ENCODE measurements at regions of chr2 and their contacts with region 1.

Region 1: DNA sequence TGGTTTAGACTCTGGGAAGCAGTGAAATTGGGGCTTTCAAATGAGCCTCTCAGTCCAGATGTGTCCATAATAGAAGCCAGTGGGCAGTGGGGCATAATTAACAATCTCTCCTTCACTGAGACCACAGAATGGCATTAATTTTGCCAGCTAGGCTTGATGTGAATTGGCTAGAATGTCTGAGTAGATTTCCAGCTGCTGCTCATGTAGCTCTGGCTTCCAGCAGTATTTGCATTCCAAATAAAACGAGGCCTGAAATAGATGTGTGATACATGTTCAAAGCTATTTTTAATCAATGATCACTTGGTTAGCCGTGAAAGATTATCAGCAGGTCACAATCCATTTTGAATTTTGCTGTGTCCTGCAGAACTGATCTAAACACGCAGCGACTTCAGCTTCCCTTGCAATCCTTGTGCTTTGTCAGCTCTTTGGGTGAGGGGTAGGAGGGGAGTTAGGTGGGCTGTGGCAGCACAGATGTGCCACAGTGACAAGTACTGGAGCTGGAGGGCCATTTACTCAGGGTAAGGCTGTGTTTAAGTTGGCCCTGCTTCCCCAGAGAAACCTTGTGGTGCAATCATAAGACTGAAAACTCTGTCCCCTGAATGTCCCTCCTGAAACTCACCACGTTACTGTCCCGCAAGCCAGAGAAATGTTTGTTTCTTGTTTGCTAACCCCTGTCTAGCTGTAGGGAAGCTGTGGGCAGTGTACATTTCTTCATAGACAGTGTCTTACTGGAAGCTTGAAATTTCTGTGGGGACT is 56.9 kb upstream of the TMEM178A start:
- DNase-seq: no peak
- ATAC-seq: peak; percentile 54
- H3K4me3 Mint-ChIP-seq: no peak overlapping the region
- H3K27ac Mint-ChIP-seq: no peak overlapping the region
- H3K4me1 Mint-ChIP-seq: peaks cover 21% of the 10 kb centered on the region
- H3K27me3 Mint-ChIP-seq: peaks cover 2% of the 10 kb centered on the region; the same call in 1 of the 2 replicates
- CTCF ChIP-seq: no peak

Region 2: GRCh38 chr2:39306626-39307025 is 302.2 kb before region 1 on chr2:
- CTCF ChIA-PET with region 1: no interaction called
- POLR2A ChIA-PET with region 1: interaction called, 10 read pairs
- DNase-seq: no peak
- ATAC-seq: no peak; the same call in 1 of the 2 replicates
- H3K4me3 Mint-ChIP-seq: no peak overlapping the region
- H3K27ac Mint-ChIP-seq: peak overlapping the region; percentile 39; the same call in 1 of the 2 replicates
- H3K4me1 Mint-ChIP-seq: peaks cover 11% of the 10 kb centered on the region
- H3K27me3 Mint-ChIP-seq: no peaks in the 10 kb centered on the region
- CTCF ChIP-seq: no peak

Region 3: GRCh38 chr2:39513641-39514094 is 95.2 kb before region 1 on chr2:
- CTCF ChIA-PET with region 1: no interaction called
- POLR2A ChIA-PET with region 1: no interaction called
- DNase-seq: peak; percentile 35
- ATAC-seq: peak; percentile 39
- H3K4me3 Mint-ChIP-seq: no peak overlapping the region
- H3K27ac Mint-ChIP-seq: peak overlapping the region; percentile 26
- H3K4me1 Mint-ChIP-seq: peaks cover 70% of the 10 kb centered on the region
- H3K27me3 Mint-ChIP-seq: no peaks in the 10 kb centered on the region
- CTCF ChIP-seq: 0 out of 2 replicates have a peak, but pooled peaks have one; percentile 17

Region 4: DNA sequence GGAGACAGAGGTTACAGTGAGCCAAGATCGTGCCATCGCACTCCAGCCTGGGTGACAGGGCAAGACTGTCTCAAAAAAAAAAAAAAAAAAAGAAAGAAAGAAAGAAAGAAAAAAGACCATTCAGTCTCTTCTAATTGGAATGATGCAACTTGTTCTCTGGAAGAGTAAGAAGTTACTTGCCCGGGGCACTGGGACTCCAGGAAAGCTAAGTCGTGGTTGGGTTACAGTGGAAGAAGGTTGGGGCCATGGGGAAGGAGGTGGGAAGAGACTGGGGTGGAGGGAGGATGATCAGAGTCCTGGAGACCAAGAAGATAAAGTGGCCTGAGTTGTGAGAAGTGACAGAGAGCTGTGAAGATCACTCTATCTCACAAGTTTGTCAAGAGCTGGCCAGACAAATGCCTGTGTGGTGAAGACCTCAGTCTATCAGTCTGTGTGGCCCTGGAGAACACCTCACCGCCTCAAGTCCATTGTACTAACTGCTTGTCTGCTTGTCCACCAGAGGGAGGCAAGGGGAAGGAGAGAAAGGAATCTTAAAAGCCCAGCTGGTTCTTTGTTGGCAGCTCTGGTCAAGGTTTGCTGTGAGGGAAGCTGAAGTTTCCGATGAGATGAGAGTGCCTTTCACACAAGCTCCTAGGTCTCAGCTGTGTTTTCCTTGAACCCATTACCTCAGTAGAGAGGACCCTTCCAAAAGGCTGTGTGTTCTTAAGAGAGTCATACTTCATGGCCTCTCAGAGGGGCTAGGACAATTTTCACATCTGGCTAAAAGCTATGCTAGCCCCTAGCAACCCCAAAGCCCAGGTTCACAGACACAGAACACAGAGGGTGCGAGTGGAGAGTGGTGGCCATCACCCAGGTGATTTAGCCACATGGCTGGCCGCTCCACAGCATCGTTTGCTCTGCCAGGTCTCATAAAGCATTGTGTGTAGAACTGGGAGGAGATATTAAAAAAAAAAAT is 15.1 kb before region 1 on chr2:
- CTCF ChIA-PET with region 1: interaction called, 10 read pairs
- POLR2A ChIA-PET with region 1: no interaction called
- DNase-seq: peak; percentile 40
- ATAC-seq: peak; percentile 97
- H3K4me3 Mint-ChIP-seq: no peak overlapping the region
- H3K27ac Mint-ChIP-seq: 0 out of 2 replicates have a peak overlapping the region, but pooled peaks have one; percentile 25
- H3K4me1 Mint-ChIP-seq: peaks cover 12% of the 10 kb centered on the region
- H3K27me3 Mint-ChIP-seq: no peaks in the 10 kb centered on the region
- CTCF ChIP-seq: no peak

Measured in WTC11 (cell line).